ENCODE measurements at regions of chr10 and their contacts with region 1.

Region 1: DNA sequence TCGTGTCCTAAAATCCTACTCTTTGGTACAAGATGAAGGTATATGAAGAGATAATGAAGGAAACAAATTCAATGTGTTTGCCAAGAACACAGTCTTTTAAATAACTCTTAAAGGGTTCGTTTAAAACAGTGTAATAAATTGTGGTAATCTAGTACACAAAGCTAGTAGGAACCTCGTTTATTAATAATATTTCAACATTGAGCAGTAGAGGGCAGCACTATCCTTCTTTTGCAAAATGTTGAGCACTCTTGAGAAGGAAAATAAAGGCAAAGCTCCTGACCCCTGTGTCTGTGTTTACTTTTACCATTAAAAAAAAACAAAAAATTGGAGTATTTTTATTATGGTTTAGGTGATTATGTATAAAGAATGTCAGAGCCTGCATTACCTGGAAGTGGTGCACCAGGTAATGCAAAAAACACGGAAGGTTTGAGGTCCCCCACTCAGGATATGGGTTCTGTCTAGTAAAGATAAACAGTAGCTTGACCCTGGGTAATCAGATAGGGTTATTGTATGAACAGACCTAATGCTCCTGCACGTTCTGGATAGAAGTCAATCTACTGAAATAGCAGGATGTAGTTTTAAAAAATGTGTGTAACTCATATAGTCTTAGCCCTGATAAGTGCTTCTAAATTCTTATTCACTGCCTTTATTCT is 5.7 kb upstream of the GOT1 start:
- DNase-seq: peak; percentile 67 to 85 (median 79)
- H3K4me3 ChIP-seq: peak overlapping the region in 1 of 7 experiments; percentile 46
- H3K27ac ChIP-seq: peak overlapping the region in 1 of 2 experiments; percentile 22
- H3K4me1 ChIP-seq: peaks cover 0 to 17% (median 9%) of the 10 kb centered on the region in 4 experiments
- H3K27me3 ChIP-seq: no peaks in the 10 kb centered on the region

Region 2: DNA sequence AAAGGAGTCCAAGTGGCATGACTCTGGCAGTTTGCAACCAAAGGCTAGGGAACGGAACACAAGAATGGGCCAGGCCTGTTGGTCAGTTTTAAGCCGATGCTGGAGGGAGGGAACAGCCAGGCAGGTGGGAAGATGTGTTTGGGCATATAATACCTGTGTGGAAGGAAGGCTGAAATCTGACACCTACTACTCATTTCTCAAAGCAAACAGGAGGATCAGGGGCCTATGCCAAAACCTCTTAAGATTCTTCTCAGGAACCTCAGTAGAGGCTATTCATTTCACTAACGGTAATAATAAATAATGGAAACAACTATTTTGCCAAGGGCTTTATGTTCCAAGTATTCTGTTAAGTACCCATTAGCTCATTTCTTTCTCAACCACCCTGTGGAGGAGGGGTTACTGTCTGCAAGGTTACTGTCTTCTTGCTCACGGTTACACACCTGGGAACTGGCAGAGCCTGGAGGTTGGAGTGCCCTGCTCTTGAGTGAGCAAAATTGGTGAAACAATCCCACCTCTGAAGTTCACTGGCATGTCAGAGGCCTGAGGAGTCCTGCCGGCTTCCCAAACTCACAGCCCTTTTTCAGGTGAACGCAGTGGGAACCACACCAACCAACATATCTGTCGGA is 41.2 kb before region 1 on chr10:
- CTCF ChIA-PET with region 1: interaction called, 22 read pairs
- POLR2A ChIA-PET with region 1: no interaction called
- DNase-seq: no peak
- H3K4me3 ChIP-seq: no peak overlapping the region
- H3K27ac ChIP-seq: no peak overlapping the region
- H3K4me1 ChIP-seq: peaks cover 3 to 25% (median 18%) of the 10 kb centered on the region in 4 experiments
- H3K27me3 ChIP-seq: no peaks in the 10 kb centered on the region

Region 3: DNA sequence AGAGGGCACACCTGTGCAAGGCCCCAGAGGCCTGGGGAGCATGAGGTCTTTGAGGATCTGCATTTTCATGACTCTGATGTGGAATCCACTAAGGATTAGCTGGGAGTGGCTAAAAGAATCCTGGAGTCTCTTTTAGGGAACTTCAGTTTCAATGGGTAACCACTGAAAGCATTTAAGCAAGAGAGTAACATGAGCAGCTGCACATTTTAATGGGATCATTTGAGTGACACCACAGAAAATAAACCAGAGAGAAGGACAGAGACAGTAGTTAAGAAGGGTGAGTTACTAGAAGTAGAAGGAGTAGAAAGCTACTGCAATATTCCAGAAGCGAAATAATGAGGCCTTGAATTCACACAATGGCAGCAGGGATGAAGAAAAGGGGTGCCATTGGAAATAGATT is 10.9 kb before region 1 on chr10:
- CTCF ChIA-PET with region 1: interaction called, 17 read pairs
- POLR2A ChIA-PET with region 1: no interaction called
- DNase-seq: no peak
- H3K4me3 ChIP-seq: no peak overlapping the region
- H3K27ac ChIP-seq: no peak overlapping the region
- H3K4me1 ChIP-seq: peaks cover 0 to 10% (median 7%) of the 10 kb centered on the region in 4 experiments
- H3K27me3 ChIP-seq: no peaks in the 10 kb centered on the region

Region 4: GRCh38 chr10:99484603-99485581 is 48.8 kb after region 1 on chr10:
- CTCF ChIA-PET with region 1: interaction called, 17 read pairs
- POLR2A ChIA-PET with region 1: no interaction called
- DNase-seq: peak in 2 of 3 donors; percentile 17 to 21
- H3K4me3 ChIP-seq: no peak overlapping the region
- H3K27ac ChIP-seq: no peak overlapping the region
- H3K4me1 ChIP-seq: peaks cover 0 to 11% (median 2%) of the 10 kb centered on the region in 4 experiments
- H3K27me3 ChIP-seq: no peaks in the 10 kb centered on the region

Region 5: GRCh38 chr10:99532687-99533495 is 96.8 kb after region 1 on chr10 and contains the start of gene NKX2-3:
- CTCF ChIA-PET with region 1: interaction called, 19 read pairs
- POLR2A ChIA-PET with region 1: no interaction called
- DNase-seq: peak; percentile 95 to 97 (median 96)
- H3K4me3 ChIP-seq: peak within 1 kb of the TSS; percentile 47 to 96 (median 83)
- H3K27ac ChIP-seq: peak within 1 kb of the TSS; percentile 72 to 93
- H3K4me1 ChIP-seq: peaks cover 8 to 88% (median 73%) of the 10 kb centered on the region in 4 experiments
- H3K27me3 ChIP-seq: peaks cover 0 to 22% (median 0%) of the 10 kb centered on the region in 5 experiments

Region 6: GRCh38 chr10:99560277-99561126 is 124.4 kb after region 1 on chr10:
- CTCF ChIA-PET with region 1: interaction called, 20 read pairs
- POLR2A ChIA-PET with region 1: no interaction called
- DNase-seq: peak in 2 of 3 donors; percentile 42 to 51
- H3K4me3 ChIP-seq: no peak overlapping the region
- H3K27ac ChIP-seq: no peak overlapping the region
- H3K4me1 ChIP-seq: peaks cover 0 to 7% (median under 1%) of the 10 kb centered on the region in 4 experiments
- H3K27me3 ChIP-seq: no peaks in the 10 kb centered on the region